ENCODE measurements at regions of chr1 and their contacts with region 1.

Region 1: DNA sequence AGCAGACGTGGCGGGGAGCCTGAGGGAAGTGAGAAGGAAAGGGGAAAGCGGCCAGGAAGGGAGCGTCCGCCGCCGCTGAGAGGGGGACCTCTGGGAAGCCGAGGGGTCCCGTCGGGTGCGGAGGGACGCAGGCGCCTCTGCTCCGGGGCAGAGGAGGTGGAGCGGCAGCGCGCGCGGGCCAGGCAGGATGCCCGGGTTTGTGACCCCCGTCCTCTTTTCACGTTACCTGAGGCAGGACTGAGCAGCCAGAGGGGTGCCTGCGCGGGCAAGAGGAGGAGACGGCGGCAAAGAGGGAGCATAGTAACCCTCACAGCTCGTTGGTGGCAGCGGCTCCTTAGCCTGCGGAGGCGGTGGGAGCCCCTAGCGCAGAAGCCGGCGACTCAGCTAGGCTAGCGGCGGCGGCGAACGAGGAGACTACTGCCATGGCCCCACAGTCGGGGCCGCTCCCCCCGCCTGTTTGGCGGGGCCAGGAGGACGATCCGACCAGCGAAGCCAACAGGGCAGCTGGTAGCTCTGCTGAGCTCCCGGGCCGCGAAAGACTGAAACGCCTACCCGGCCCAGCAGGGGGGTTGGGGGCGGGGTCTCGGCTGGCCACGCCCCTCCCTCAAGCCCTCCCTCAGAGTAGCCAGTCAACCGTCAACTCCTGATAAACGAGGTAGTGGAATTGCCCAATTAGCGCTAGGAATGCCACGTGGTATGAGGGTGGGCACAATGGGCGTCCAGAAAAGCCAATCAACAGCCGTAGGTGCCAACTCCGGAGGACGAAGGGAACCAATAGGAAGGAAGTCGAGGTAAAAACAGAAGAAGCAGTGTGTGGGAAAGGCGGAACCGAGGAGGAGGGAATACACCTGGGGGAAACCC is at the start of gene TESK2:
- DNase-seq: peak; percentile 92 to 99 (median 98)
- H3K4me3 ChIP-seq: peak within 1 kb of the TSS; percentile 72
- H3K4me3 Mint-ChIP-seq: no peak within 1 kb of the TSS
- H3K27ac ChIP-seq: peak within 1 kb of the TSS; percentile 28
- H3K27ac Mint-ChIP-seq: no peak within 1 kb of the TSS
- H3K4me1 ChIP-seq: peaks cover 14% of the 10 kb centered on the region
- H3K4me1 Mint-ChIP-seq: peaks cover 6 to 11% (median 8%) of the 10 kb centered on the region in 3 donors
- H3K27me3 ChIP-seq: no peaks in the 10 kb centered on the region
- H3K27me3 Mint-ChIP-seq: no peaks in the 10 kb centered on the region
- total RNA-seq, gene TESK2: 2.9 to 3.6 TPM

Region 2: GRCh38 chr1:45018599-45019230 is 472.1 kb before region 1 on chr1:
- CTCF ChIA-PET with region 1: interaction called, 63 read pairs
- POLR2A ChIA-PET with region 1: interaction called, 9 read pairs
- DNase-seq: peak; percentile 20 to 69 (median 27)
- H3K4me3 ChIP-seq: no peak overlapping the region
- H3K4me3 Mint-ChIP-seq: no peak overlapping the region
- H3K27ac ChIP-seq: no peak overlapping the region
- H3K27ac Mint-ChIP-seq: peak overlapping the region in 1 of 8 donors; percentile 63
- H3K4me1 ChIP-seq: no peaks in the 10 kb centered on the region
- H3K4me1 Mint-ChIP-seq: peaks cover 7 to 15% (median 13%) of the 10 kb centered on the region in 3 donors
- H3K27me3 ChIP-seq: no peaks in the 10 kb centered on the region
- H3K27me3 Mint-ChIP-seq: peaks cover 0 to 2% of the 10 kb centered on the region in 2 donors

Region 3: DNA sequence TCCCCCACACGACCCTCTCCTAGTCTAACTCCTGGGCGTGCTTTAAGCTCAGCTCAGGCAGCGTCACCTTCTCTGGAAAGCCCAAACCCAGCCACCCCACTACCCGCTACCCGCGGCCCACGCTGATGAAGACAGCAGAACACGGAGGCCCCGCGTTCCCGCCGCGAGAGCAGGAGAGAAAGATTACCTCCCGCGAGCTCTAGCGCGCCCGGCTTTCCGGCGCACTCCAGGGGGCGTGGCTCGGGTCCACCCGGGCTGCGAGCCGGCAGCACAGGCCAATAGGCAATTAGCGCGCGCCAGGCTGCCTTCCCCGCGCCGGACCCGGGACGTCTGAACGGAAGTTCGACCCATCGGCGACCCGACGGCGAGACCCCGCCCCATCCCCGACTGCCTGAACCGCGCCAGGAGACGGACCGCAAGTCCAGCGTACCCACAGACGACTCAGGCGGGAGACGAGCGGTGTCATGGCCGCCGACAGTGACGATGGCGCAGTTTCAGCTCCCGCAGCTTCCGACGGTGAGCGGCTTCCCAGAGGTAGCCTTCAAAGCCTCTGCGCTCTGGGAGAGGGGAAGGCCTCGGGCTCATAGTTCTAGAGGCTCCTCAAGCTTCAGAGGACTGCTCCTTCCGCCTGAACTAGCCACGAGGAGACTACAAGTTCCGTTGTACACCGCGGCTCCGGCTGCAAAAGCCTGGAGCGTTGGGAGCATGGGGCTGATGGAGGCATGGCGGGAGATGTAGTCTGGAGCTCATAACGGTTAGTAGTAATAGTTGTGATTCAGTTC is 150.9 kb before region 1 on chr1 and contains the starts of genes MUTYH and TOE1:
- CTCF ChIA-PET with region 1: interaction called, 32 read pairs
- POLR2A ChIA-PET with region 1: interaction called, 27 read pairs
- DNase-seq: peak; percentile 84 to 92 (median 89)
- H3K4me3 ChIP-seq: peak within 1 kb of the TSS; percentile 99
- H3K4me3 Mint-ChIP-seq: peak within 1 kb of the TSS; percentile 99 to 100 (median 100)
- H3K27ac ChIP-seq: peak within 1 kb of the TSS; percentile 99
- H3K27ac Mint-ChIP-seq: peak within 1 kb of the TSS; percentile 97 to 99 (median 99)
- H3K4me1 ChIP-seq: peaks cover 43% of the 10 kb centered on the region
- H3K4me1 Mint-ChIP-seq: peaks cover 48 to 68% (median 61%) of the 10 kb centered on the region in 3 donors
- H3K27me3 ChIP-seq: no peaks in the 10 kb centered on the region
- H3K27me3 Mint-ChIP-seq: no peaks in the 10 kb centered on the region
- total RNA-seq, gene MUTYH: 70.1 to 75.4 TPM
- total RNA-seq, gene TOE1: 46.4 to 48.9 TPM

Region 4: DNA sequence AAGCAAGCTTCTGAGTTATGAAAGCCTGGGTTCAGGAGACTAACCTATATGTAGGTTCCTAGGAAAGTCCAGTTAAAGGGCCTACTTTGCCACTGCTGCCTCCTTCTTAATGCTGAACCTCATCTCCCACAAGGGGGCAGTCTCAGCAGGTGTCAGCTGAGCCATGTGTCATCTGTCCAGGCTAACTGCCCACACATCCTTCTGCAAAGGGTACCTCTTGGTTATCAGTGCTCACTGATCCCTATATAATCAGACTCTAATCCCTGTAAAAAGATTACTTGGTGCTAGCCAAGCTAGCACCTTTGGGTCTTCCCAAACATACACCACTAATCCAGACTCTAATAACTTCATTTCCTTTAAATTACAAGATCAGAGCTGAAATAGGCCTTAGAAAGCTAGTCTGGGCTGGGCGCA is 21.8 kb after region 1 on chr1:
- CTCF ChIA-PET with region 1: interaction called, 10 read pairs
- POLR2A ChIA-PET with region 1: no interaction called
- DNase-seq: peak; percentile 24 to 65 (median 44)
- H3K4me3 ChIP-seq: no peak overlapping the region
- H3K4me3 Mint-ChIP-seq: no peak overlapping the region
- H3K27ac ChIP-seq: no peak overlapping the region
- H3K27ac Mint-ChIP-seq: peak overlapping the region in 3 of 8 donors; percentile 42 to 82 (median 51)
- H3K4me1 ChIP-seq: no peaks in the 10 kb centered on the region
- H3K4me1 Mint-ChIP-seq: peaks cover 0 to 12% (median 3%) of the 10 kb centered on the region in 3 donors
- H3K27me3 ChIP-seq: no peaks in the 10 kb centered on the region
- H3K27me3 Mint-ChIP-seq: no peaks in the 10 kb centered on the region

Measured in CD8-positive, alpha-beta memory T cell (primary cell).